Body of pancreas (tissue), 4 donors: ENCODE measurements at regions of chr3 and their contacts with region 1.

Region 1: GRCh38 chr3:46998121-46998851 is 18.8 kb downstream of the NBEAL2 start:
- DNase-seq: peak; percentile 87 to 89 (median 88)
- ATAC-seq: peak; percentile 85
- H3K4me3 ChIP-seq: no peak overlapping the region
- H3K27ac ChIP-seq: no peak overlapping the region
- H3K4me1 ChIP-seq: no peaks in the 10 kb centered on the region
- H3K27me3 ChIP-seq: no peaks in the 10 kb centered on the region
- CTCF ChIP-seq: peak; percentile 80 to 96 (median 91)
- POLR2A ChIP-seq: no peak

Region 2: GRCh38 chr3:46705022-46705530 is 293.2 kb before region 1 on chr3:
- intact Hi-C with region 1: loop called (anchors 5 kb)
- DNase-seq: peak; percentile 81 to 84 (median 84)
- ATAC-seq: peak; percentile 85
- H3K4me3 ChIP-seq: no peak overlapping the region
- H3K27ac ChIP-seq: no peak overlapping the region
- H3K4me1 ChIP-seq: peaks cover 12% of the 10 kb centered on the region
- H3K27me3 ChIP-seq: no peaks in the 10 kb centered on the region
- CTCF ChIP-seq: peak; percentile 90 to 98 (median 96)
- POLR2A ChIP-seq: no peak

Region 3: DNA sequence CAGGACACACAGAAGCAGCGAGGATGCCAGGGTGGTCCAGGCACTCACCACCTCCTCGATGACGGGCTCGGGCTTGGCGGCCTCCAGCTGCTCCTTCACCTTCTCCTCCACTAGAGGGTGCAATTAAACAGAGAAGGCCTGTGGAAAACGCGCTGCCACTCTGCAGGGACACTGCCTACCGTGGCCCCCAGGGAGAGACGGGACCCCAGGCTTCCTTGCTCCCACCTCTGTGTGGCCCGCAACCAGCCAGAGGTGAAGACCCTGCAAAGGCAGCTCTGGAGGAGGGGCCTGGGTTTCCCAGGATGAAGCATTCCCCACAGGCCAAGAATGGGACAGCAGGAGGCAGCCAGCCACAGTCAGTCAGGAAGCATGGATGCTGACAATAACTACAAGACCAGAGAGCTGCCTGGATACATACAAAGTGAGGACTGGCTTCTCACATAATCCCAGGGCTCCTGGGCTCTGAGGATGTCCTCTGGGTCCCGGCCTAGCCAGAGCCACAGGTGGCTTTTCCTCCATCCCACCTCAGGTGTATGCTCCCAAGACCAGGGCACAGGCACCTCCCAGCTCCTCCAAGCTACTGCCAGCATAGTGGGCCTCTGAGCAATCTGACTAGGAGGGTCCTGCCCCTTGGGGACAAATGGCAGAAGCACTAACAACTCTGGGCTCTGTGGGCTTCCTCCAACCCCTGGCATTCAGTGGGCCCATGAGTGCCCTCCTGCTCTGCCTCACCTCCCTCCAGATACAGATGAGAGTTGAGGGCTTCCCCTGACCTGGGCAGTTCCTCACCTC is 74.5 kb before region 1 on chr3:
- intact Hi-C with region 1: loop called (anchors 5 kb)
- DNase-seq: peak in 3 of 4 donors; percentile 51 to 55 (median 53)
- ATAC-seq: peak; percentile 70
- H3K4me3 ChIP-seq: no peak overlapping the region
- H3K27ac ChIP-seq: peak overlapping the region in 2 of 4 donors; percentile 9 to 27
- H3K4me1 ChIP-seq: peaks cover 31% of the 10 kb centered on the region
- H3K27me3 ChIP-seq: no peaks in the 10 kb centered on the region
- CTCF ChIP-seq: peak; percentile 23 to 96 (median 68)
- POLR2A ChIP-seq: no peak